Activated B cell treated with CpG ODN at 0.5 μM for 24 hours (primary cell): ENCODE measurements at regions of chr2 and their contacts with region 1.

Region 1: DNA sequence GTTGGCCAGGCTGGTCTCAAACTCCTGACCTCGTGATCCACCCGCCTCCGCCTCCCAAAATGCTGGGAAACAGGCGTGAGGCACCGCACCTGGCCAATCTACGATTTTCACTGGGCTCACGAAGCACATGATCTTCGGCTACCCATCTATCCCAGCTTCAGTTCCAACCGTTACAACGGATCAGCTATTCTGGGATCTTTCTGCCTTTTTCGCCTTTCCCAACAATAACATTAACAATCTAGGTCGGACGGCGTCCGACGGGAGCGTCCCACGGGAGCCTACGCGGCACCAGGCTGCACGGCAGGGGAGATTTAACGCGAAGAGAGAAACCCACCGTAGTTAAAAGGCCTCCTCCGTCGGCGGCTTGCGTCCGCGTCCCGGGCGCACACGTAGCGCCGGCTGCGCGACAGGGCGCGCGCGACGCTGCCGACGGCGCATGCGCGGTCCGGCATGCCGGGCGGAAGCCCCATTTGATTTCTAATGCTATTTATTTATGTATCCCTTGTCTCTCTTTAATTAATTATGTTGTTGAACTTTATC is at the start of gene MSL3B:
- DNase-seq: peak; percentile 57
- ATAC-seq: peak; percentile 87
- H3K4me3 Mint-ChIP-seq: peak within 1 kb of the TSS; percentile 93
- H3K27ac Mint-ChIP-seq: peak within 1 kb of the TSS; percentile 80
- H3K4me1 Mint-ChIP-seq: peaks cover 18% of the 10 kb centered on the region
- H3K27me3 Mint-ChIP-seq: no peaks in the 10 kb centered on the region
- CTCF ChIP-seq: no peak

Region 2: GRCh38 chr2:232697100-232697865 is 1170.8 kb before region 1 on chr2 and contains the start of gene GIGYF2:
- CTCF ChIA-PET with region 1: no interaction called
- POLR2A ChIA-PET with region 1: no interaction called
- intact Hi-C with region 1: loop called (anchors 5 kb)
- DNase-seq: peak; percentile 89
- ATAC-seq: peak; percentile 86
- H3K4me3 Mint-ChIP-seq: peak within 1 kb of the TSS; percentile 89
- H3K27ac Mint-ChIP-seq: peak within 1 kb of the TSS; percentile 79
- H3K4me1 Mint-ChIP-seq: peaks cover 33% of the 10 kb centered on the region
- H3K27me3 Mint-ChIP-seq: no peaks in the 10 kb centered on the region
- CTCF ChIP-seq: no peak
- total RNA-seq, gene GIGYF2: 68.9 and 77.9 TPM in 2 replicates

Region 3: GRCh38 chr2:233822781-233823730 is 45.0 kb before region 1 on chr2:
- CTCF ChIA-PET with region 1: no interaction called
- POLR2A ChIA-PET with region 1: no interaction called
- intact Hi-C with region 1: no loop called
- DNase-seq: no peak
- ATAC-seq: no peak
- H3K4me3 Mint-ChIP-seq: no peak overlapping the region
- H3K27ac Mint-ChIP-seq: no peak overlapping the region
- H3K4me1 Mint-ChIP-seq: no peaks in the 10 kb centered on the region
- H3K27me3 Mint-ChIP-seq: peaks cover 5% of the 10 kb centered on the region
- CTCF ChIP-seq: no peak

Region 4: GRCh38 chr2:233854241-233854981 is 13.7 kb before region 1 on chr2 and contains the start of gene HJURP:
- CTCF ChIA-PET with region 1: no interaction called
- POLR2A ChIA-PET with region 1: no interaction called
- intact Hi-C with region 1: loop called (anchors 1 kb)
- DNase-seq: peak; percentile 82
- ATAC-seq: peak; percentile 99
- H3K4me3 Mint-ChIP-seq: peak within 1 kb of the TSS; percentile 97
- H3K27ac Mint-ChIP-seq: peak within 1 kb of the TSS; percentile 81
- H3K4me1 Mint-ChIP-seq: peaks cover 22% of the 10 kb centered on the region
- H3K27me3 Mint-ChIP-seq: peaks cover 7% of the 10 kb centered on the region
- CTCF ChIP-seq: no peak
- total RNA-seq, gene HJURP: 1.0 and 1.5 TPM in 2 replicates

Region 5: GRCh38 chr2:233915128-233915527 is 47.1 kb after region 1 on chr2:
- CTCF ChIA-PET with region 1: no interaction called
- POLR2A ChIA-PET with region 1: no interaction called
- intact Hi-C with region 1: no loop called
- DNase-seq: no peak
- ATAC-seq: no peak
- H3K4me3 Mint-ChIP-seq: no peak overlapping the region
- H3K27ac Mint-ChIP-seq: no peak overlapping the region
- H3K4me1 Mint-ChIP-seq: no peaks in the 10 kb centered on the region
- H3K27me3 Mint-ChIP-seq: peaks cover 21% of the 10 kb centered on the region
- CTCF ChIP-seq: no peak

Region 6: GRCh38 chr2:234288974-234289455 is 421.0 kb after region 1 on chr2:
- CTCF ChIA-PET with region 1: no interaction called
- POLR2A ChIA-PET with region 1: no interaction called
- intact Hi-C with region 1: no loop called
- DNase-seq: peak; percentile 50
- ATAC-seq: no peak
- H3K4me3 Mint-ChIP-seq: no peak overlapping the region
- H3K27ac Mint-ChIP-seq: no peak overlapping the region
- H3K4me1 Mint-ChIP-seq: peaks cover 54% of the 10 kb centered on the region
- H3K27me3 Mint-ChIP-seq: peaks cover 17% of the 10 kb centered on the region
- CTCF ChIP-seq: no peak